Ascending aorta (tissue), 2 donors: ENCODE measurements at regions of chr3 and their contacts with region 1.

Region 1: GRCh38 chr3:30112902-30113484 is 493.4 kb upstream of the TGFBR2 start:
- DNase-seq: no peak
- H3K4me3 ChIP-seq: no peak overlapping the region
- H3K27ac ChIP-seq: no peak overlapping the region
- H3K4me1 ChIP-seq: peaks cover 0 to 6% of the 10 kb centered on the region in 2 donors
- H3K27me3 ChIP-seq: no peaks in the 10 kb centered on the region
- CTCF ChIP-seq: peak; percentile 58 to 77 (median 63)

Region 2: GRCh38 chr3:30098653-30099455 is 14.1 kb before region 1 on chr3:
- intact Hi-C with region 1: no loop called
- DNase-seq: no peak
- H3K4me3 ChIP-seq: no peak overlapping the region
- H3K27ac ChIP-seq: no peak overlapping the region
- H3K4me1 ChIP-seq: no peaks in the 10 kb centered on the region
- H3K27me3 ChIP-seq: no peaks in the 10 kb centered on the region
- CTCF ChIP-seq: no peak

Region 3: DNA sequence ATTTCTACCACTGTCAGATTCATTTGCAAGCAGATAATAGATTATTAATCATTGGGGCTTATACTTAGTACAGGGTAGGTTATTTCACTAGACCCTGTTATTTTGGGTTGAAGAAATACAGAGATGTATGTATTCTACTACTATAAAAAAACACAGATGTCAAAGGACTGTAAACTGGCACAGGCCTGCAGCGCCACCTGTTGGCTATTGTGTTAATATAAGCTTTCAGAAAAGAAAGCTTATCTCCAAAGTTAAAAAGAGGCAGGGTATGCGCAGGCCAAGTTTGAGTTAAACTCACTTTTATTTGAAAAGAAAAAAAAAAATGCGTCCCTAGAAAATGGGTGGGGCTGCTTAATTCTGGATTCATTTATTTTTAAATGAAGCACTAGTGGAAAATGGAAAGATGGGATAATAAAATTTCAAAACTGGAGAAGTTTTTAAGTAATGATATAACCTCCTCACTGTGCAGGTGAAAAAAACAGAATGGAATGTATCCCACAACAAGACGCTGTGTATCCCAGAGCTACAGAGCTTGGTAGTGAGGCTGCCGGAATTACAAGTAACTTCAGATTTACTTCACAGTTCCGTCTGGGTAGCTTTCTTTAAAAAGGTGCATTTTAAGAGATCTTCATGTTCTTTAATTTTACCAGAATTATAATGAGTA is 86.2 kb after region 1 on chr3:
- intact Hi-C with region 1: loop called (anchors 2 kb)
- DNase-seq: peak in 1 of 2 donors; percentile 82
- H3K4me3 ChIP-seq: peak overlapping the region in 1 of 2 donors; percentile 15
- H3K27ac ChIP-seq: no peak overlapping the region
- H3K4me1 ChIP-seq: peaks cover 0 to 12% of the 10 kb centered on the region in 2 donors
- H3K27me3 ChIP-seq: no peaks in the 10 kb centered on the region
- CTCF ChIP-seq: peak; percentile 72 to 89 (median 79)

Region 4: DNA sequence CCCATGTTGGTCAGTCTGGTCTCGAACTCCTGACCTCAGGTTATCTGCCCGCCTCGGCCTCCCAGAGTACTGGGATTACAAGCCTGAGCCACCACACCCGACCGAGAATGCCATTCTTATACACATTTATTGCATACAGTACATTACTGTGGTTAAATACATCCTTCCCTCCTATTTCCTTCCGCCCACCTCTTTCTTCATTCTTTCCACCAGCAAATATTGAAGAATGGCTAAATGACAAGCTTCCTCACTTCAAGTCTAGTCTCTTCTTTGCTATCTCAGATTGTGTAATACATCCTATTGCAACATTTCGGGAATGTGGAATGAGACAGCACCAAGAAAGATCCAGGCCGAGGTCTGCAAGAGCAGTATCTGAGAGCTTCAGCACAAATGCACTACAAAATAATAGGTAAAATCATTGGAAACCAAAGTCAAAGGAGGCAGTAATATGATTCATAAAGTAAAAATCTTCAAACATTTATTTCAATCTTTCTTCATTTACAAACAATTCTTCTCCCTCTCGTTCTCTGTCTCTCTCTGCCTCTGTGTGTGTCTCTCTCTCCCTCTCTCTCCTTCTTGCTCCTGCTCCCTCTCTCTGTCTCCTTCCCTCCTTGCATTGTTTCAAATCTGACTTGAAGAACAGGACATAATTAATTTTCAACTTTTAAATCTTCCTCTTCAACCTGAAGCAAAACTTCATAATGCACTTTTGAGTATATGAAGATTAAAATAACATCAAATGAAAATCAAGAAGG is 398.7 kb after region 1 on chr3:
- intact Hi-C with region 1: loop called (anchors 10 kb)
- DNase-seq: no peak
- H3K4me3 ChIP-seq: no peak overlapping the region
- H3K27ac ChIP-seq: peak overlapping the region; percentile 65 to 66
- H3K4me1 ChIP-seq: peaks cover 2 to 26% of the 10 kb centered on the region in 2 donors
- H3K27me3 ChIP-seq: no peaks in the 10 kb centered on the region
- CTCF ChIP-seq: no peak